ENCODE measurements at regions of chr10 and their contacts with region 1.

Region 1: DNA sequence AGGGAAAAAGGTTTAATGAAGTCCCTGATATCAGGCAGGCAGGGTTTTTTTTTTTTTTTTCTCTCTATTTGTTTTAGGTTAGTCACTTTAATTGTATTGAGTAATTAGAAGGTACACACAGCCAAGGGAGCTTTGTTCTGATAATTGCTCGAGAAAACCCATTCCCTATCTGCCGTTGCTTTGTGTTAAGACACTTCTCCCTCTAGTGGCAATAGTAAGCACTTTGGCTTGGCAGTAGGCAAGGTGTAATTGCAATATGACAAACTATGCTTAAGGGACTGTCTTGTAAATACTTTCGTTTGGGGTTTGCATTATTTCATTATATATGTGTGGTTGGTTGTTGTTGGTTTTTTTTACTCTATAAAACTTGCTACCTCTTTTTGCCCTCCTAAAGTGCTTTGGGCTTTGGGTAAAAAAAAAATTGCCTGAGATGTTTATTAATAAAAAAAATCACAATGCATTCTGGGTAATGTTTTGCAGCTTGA is 113.4 kb downstream of the BTRC start:
- DNase-seq: peak; percentile 23
- ATAC-seq: peak; percentile 96
- H3K4me3 ChIP-seq: no peak overlapping the region
- H3K27ac ChIP-seq: no peak overlapping the region
- H3K4me1 ChIP-seq: no peaks in the 10 kb centered on the region
- H3K27me3 ChIP-seq: no peaks in the 10 kb centered on the region
- CTCF ChIP-seq: peak; percentile 81 to 91 (median 81)
- EP300 ChIP-seq: no peak
- POLR2A ChIP-seq: no peak
- RAD21 ChIP-seq: peak; percentile 66

Region 2: DNA sequence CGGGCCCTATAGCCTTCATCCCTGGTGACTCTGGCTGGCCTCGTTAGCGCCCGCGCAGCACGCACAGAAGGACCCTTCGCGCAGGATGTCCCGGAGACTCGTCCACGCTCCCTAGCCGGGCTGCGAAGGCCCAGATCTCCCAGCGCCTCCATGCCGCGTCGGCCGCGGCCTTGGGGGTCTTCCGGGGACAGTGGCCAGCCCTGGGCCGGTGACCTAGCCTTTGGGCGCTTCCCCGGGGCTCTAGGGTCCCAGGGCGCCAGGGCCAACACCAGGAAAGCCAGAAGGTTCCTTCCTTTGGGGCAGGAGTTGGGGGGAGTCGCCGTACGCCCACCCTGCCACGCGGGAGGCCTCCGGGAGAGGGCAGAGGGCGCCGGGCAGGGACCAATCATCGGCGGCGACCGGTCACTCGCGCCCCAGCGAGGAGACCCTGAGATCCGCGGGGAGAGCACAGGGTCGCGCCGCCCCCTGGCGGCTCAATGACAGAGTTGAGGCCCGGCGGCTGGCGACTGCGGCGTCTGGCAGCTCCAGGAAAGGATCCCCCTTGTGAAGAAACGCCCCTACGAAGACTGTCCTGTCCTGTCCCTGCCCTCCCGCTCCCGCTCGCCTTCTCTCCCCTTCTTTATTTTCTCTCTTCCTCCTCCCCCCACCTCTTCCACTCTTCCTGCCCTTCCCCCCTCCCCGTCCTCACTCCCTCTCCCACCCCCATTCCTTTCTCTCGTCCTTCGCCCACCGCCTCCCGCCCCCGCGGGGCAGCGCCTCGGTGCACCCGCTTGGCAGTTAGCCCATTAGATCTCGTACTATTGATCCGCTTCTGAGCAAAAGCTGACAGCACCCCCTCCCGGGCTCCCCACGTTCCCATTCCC is 175.8 kb before region 1 on chr10:
- CTCF ChIA-PET with region 1: interaction called, 16 read pairs
- POLR2A ChIA-PET with region 1: no interaction called
- RAD21 ChIA-PET with region 1: interaction called, 7 read pairs
- SMC1A ChIA-PET with region 1: interaction called, 6 read pairs
- in situ Hi-C with region 1: no loop called
- intact Hi-C with region 1: no loop called
- DNase-seq: no peak
- ATAC-seq: peak; percentile 90
- H3K4me3 ChIP-seq: peak overlapping the region; percentile 46; the same call in 1 of the 2 replicates
- H3K27ac ChIP-seq: no peak overlapping the region
- H3K4me1 ChIP-seq: no peaks in the 10 kb centered on the region
- H3K27me3 ChIP-seq: peaks cover 10 to 19% of the 10 kb centered on the region in 2 experiments
- CTCF ChIP-seq: peak; percentile 50 to 65 (median 51)
- EP300 ChIP-seq: no peak
- POLR2A ChIP-seq: no peak
- RAD21 ChIP-seq: peak; percentile 42

Region 3: GRCh38 chr10:101453791-101454718 is 13.3 kb before region 1 on chr10:
- CTCF ChIA-PET with region 1: interaction called, 56 read pairs
- POLR2A ChIA-PET with region 1: no interaction called
- RAD21 ChIA-PET with region 1: interaction called, 5 read pairs
- SMC1A ChIA-PET with region 1: interaction called, 10 read pairs
- in situ Hi-C with region 1: no loop called
- intact Hi-C with region 1: no loop called
- DNase-seq: no peak
- ATAC-seq: peak; percentile 40
- H3K4me3 ChIP-seq: no peak overlapping the region
- H3K27ac ChIP-seq: no peak overlapping the region
- H3K4me1 ChIP-seq: no peaks in the 10 kb centered on the region
- H3K27me3 ChIP-seq: no peaks in the 10 kb centered on the region
- CTCF ChIP-seq: no peak
- EP300 ChIP-seq: no peak
- POLR2A ChIP-seq: no peak
- RAD21 ChIP-seq: no peak

Region 4: DNA sequence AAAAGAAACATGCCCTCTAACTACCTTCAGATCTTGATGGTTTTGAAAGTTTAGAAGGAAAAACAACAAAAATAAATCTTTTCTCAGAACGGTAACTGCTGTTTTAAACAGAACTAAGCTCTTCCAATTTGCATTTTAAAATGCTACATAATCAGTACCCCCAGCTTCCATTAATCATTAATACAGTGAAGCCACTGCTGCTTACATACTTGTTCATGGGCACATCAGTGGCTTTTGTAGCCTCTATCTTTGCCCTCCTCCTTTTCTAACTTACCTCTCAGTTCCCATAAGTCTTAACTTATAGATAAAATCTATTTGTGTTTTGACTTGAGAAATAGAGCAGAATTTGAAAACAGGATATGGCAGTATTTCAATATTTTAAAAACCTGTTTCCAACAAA is 11.6 kb after region 1 on chr10:
- CTCF ChIA-PET with region 1: interaction called, 51 read pairs
- POLR2A ChIA-PET with region 1: no interaction called
- RAD21 ChIA-PET with region 1: no interaction called
- SMC1A ChIA-PET with region 1: interaction called, 11 read pairs
- in situ Hi-C with region 1: no loop called
- intact Hi-C with region 1: no loop called
- DNase-seq: no peak
- ATAC-seq: no peak
- H3K4me3 ChIP-seq: no peak overlapping the region
- H3K27ac ChIP-seq: no peak overlapping the region
- H3K4me1 ChIP-seq: no peaks in the 10 kb centered on the region
- H3K27me3 ChIP-seq: no peaks in the 10 kb centered on the region
- CTCF ChIP-seq: no peak
- EP300 ChIP-seq: no peak
- POLR2A ChIP-seq: no peak
- RAD21 ChIP-seq: no peak

Region 5: GRCh38 chr10:101485681-101486554 is 18.6 kb after region 1 on chr10:
- CTCF ChIA-PET with region 1: interaction called, 51 read pairs
- POLR2A ChIA-PET with region 1: no interaction called
- RAD21 ChIA-PET with region 1: no interaction called
- SMC1A ChIA-PET with region 1: interaction called, 11 read pairs
- in situ Hi-C with region 1: no loop called
- intact Hi-C with region 1: no loop called
- DNase-seq: no peak
- ATAC-seq: no peak
- H3K4me3 ChIP-seq: no peak overlapping the region
- H3K27ac ChIP-seq: no peak overlapping the region
- H3K4me1 ChIP-seq: no peaks in the 10 kb centered on the region
- H3K27me3 ChIP-seq: no peaks in the 10 kb centered on the region
- CTCF ChIP-seq: no peak
- EP300 ChIP-seq: no peak
- POLR2A ChIP-seq: no peak
- RAD21 ChIP-seq: no peak